PC-3 (cell line): ENCODE measurements at regions of chr10 and their contacts with region 1.

Region 1: GRCh38 chr10:77949167-77949566 is 22.6 kb upstream of the DLG5 start:
- DNase-seq: peak; percentile 100
- ATAC-seq: peak; percentile 94
- H3K4me3 ChIP-seq: peak overlapping the region; percentile 3; the same call in 1 of the 2 replicates
- H3K27ac ChIP-seq: peak overlapping the region; percentile 69
- H3K4me1 ChIP-seq: peaks cover 36% of the 10 kb centered on the region
- H3K27me3 ChIP-seq: no peaks in the 10 kb centered on the region
- CTCF ChIP-seq: no peak

Region 2: DNA sequence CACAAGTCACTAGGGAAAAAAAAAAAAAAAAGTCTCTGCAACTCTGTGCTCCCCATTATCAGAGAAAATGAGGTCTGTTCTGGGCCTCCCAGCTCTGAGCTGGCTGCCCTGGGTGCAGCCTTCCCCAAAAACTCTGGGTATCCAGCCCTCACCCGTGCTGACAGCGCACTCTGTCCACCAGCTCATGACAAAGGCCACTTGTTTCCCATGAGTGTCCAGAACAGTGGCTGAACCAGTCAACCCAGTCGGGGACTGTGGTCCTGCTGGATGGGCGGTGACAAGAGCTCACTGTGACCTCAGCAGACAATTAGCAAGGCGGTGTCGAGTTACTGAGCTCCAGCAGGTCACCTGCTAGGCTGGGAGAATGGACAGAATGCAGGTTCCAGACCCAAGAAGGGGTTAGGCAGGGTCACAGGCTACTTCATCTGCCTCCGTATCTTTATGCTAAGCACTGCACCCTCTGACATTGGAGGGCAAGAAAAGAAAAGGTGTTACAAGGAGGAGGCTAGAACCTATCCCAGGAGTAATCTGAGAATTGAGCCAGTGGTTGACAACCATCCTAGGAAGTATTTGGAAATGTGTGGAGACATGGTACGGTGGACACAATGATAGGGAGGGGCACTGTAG is 59.8 kb before region 1 on chr10:
- CTCF ChIA-PET with region 1: interaction called, 3 read pairs
- POLR2A ChIA-PET with region 1: interaction called, 17 read pairs
- intact Hi-C with region 1: no loop called
- DNase-seq: peak; percentile 100
- ATAC-seq: peak; percentile 94
- H3K4me3 ChIP-seq: no peak overlapping the region
- H3K27ac ChIP-seq: peak overlapping the region; percentile 71
- H3K4me1 ChIP-seq: peaks cover 30% of the 10 kb centered on the region
- H3K27me3 ChIP-seq: no peaks in the 10 kb centered on the region
- CTCF ChIP-seq: no peak

Region 3: DNA sequence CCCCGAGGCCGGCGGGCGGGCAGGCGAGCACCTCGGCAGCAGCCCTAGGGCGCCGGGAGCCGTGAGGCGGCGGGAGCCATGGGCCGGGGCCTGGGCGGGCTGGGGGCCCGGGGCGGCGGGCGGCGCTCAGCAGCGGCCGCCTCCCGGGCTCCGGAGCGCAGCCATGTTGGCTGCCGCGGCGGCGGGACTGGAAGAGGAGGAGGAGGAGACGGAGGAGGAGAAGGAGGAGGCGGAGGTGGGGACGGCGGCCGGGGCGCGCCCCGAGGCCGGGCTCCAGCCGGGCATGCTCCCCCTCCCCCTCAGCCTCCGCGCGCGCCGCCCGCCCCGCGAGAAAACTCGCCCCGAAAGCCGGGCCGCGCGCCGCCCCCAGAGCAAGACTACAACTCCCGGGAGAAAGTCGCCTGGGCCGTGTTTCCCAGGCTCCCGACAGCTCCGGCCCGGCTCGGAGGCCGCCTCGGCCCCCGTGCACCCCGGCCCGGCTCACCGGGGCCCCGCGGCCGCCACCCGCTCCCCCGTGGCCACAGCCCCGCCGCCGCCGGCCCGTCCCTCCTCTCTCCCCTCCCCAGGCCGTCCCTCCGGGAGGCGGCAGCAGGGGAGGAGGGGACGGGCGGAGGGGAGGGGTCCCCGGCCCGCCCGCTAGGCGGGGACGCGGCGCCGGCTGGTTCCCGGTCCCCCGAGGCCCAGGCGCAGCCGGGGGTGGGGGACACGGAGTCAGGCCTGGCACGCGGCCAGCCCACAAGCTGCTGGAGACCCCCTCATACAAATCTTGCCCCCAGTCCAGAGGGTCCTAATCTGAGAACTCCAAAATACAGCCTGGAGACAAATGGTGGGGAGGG is 22.4 kb before region 1 on chr10 and contains the start of gene DLG5:
- CTCF ChIA-PET with region 1: no interaction called
- POLR2A ChIA-PET with region 1: interaction called, 5 read pairs
- intact Hi-C with region 1: loop called (anchors 1 kb)
- DNase-seq: peak; percentile 89
- ATAC-seq: peak; percentile 77
- H3K4me3 ChIP-seq: peak within 1 kb of the TSS; percentile 74
- H3K27ac ChIP-seq: no peak within 1 kb of the TSS
- H3K4me1 ChIP-seq: peaks cover 39% of the 10 kb centered on the region
- H3K27me3 ChIP-seq: no peaks in the 10 kb centered on the region
- CTCF ChIP-seq: peak; percentile 34; the same call in 1 of the 2 replicates
- total RNA-seq, gene DLG5: 118 and 158 TPM in 2 replicates

Region 4: DNA sequence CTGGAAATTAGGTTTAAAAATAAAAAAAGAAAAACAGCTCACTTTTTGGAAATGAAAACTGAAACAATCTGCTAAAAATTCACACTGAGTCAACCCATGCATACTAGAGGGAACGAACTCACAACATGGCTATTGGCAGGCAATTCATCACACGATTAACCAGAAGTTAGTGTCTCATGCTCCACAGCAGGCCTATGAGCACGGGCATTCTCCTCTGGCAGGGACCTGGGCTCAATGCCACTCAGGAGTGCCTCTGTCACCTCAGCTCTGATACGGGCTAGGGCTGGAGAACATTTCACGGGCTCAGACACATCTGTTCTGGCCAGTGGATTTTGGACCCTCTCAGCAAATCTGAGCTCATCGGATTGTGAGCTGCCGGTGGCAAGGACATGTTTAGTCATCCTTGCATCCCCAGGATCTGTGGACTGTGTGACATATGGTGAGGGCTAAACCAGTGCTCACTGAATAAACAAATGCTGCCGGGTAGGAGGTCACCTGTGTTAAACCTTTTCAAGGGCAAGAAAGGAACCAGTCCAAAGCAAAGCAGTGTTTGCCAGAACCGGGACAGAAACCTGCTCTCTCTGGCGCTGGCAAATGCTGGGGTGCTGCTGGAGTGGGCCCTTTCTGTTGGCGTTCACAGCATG is 40.0 kb after region 1 on chr10:
- CTCF ChIA-PET with region 1: interaction called, 5 read pairs
- POLR2A ChIA-PET with region 1: no interaction called
- intact Hi-C with region 1: loop called (anchors 1 kb)
- DNase-seq: peak; percentile 86
- ATAC-seq: peak; percentile 82
- H3K4me3 ChIP-seq: no peak overlapping the region
- H3K27ac ChIP-seq: no peak overlapping the region
- H3K4me1 ChIP-seq: peaks cover 22% of the 10 kb centered on the region
- H3K27me3 ChIP-seq: no peaks in the 10 kb centered on the region
- CTCF ChIP-seq: no peak

Region 5: DNA sequence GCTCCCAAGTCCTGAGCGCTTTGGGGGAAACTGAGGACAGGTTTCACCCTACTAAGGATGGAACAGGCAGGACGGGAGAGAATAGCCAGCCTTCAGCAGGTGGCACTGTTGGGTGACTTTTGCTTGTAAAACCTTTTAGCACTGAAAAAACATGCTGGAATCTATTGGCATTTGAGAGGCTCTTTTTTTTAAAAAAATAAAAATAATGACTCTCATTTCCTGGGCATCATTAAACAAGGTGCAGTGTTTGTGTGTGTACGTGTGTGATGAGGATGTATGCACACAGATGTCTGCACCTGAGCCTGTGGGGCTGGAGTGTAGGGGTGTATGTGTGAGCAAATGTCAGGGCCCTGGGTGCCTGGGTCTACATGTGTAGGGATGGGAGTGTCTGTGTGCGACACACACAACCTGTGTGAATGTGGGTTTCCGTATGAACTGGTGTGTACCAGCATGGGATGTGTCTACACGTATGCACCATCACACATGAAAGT is 262.4 kb after region 1 on chr10:
- CTCF ChIA-PET with region 1: no interaction called
- POLR2A ChIA-PET with region 1: no interaction called
- intact Hi-C with region 1: no loop called
- DNase-seq: peak; percentile 92
- ATAC-seq: peak; percentile 66
- H3K4me3 ChIP-seq: no peak overlapping the region
- H3K27ac ChIP-seq: no peak overlapping the region
- H3K4me1 ChIP-seq: no peaks in the 10 kb centered on the region
- H3K27me3 ChIP-seq: peaks cover 69% of the 10 kb centered on the region
- CTCF ChIP-seq: peak; percentile 100